Caco-2 (cell line): ENCODE measurements at regions of chr5 and their contacts with region 1.

Region 1: GRCh38 chr5:122478741-122479413 is 166.8 kb downstream of the SNCAIP start:
- DNase-seq: peak; percentile 50 to 75
- H3K4me3 ChIP-seq: peak overlapping the region; percentile 32
- H3K4me3 Mint-ChIP-seq: peak overlapping the region; percentile 83
- H3K27ac Mint-ChIP-seq: peak overlapping the region; percentile 94
- H3K4me1 ChIP-seq: peaks cover 30% of the 10 kb centered on the region
- H3K4me1 Mint-ChIP-seq: peaks cover 33% of the 10 kb centered on the region
- H3K27me3 ChIP-seq: no peaks in the 10 kb centered on the region
- H3K27me3 Mint-ChIP-seq: no peaks in the 10 kb centered on the region
- CTCF ChIP-seq: no peak

Region 2: DNA sequence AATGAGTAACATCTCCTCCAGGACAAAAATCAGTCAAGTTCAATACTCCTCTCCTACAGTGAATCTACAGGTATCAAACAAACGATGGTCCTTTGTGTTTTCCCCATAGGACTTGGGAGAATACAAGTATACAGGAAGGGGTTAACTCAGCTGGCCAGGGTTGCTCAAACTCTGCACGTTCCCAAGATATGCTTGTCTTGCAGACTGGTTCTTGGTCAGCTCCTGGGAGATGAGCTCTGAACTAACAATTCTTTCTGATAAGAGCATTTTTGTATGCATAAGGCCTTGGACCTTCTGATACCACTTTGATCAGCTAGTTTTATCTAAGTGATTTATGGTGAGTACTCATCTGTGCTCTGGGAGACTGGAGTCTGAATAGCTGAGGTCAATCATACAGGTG is 443.0 kb before region 1 on chr5:
- CTCF ChIA-PET with region 1: no interaction called
- POLR2A ChIA-PET with region 1: no interaction called
- intact Hi-C with region 1: loop called (anchors 2 kb)
- DNase-seq: peak; percentile 82 to 92
- H3K4me3 ChIP-seq: no peak overlapping the region
- H3K4me3 Mint-ChIP-seq: peak overlapping the region; percentile 50
- H3K27ac Mint-ChIP-seq: peak overlapping the region; percentile 31
- H3K4me1 ChIP-seq: peaks cover 63% of the 10 kb centered on the region
- H3K4me1 Mint-ChIP-seq: peaks cover 76% of the 10 kb centered on the region
- H3K27me3 ChIP-seq: no peaks in the 10 kb centered on the region
- H3K27me3 Mint-ChIP-seq: no peaks in the 10 kb centered on the region
- CTCF ChIP-seq: no peak

Region 3: DNA sequence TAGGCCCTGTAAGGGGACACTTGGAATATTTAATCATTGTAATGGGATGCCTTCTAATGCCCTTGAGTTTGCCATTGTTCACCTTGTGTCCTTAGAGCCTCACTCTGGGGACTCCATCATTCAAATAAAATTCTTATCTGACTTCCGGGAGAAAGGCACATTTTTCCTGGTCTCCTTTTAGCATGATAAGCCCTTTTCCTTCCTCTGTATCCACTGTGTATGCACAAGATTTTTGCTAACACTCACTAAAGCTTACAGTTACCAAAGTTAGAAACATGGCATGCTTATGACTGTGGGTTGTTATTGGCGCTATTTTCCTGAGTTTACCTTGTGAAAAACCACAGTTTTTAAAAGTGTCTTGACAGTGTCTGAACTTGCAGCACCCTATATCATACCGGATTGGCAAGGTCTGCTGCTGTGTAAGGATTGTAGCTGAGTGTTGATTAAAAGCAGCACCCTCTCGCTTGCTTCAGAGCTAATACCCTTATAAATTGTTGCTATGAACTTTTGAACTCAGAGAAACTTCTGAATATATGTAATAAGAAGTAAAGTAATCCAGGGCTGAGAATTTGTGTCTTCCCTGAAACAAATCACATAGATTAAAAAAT is 120.4 kb before region 1 on chr5:
- CTCF ChIA-PET with region 1: no interaction called
- POLR2A ChIA-PET with region 1: no interaction called
- intact Hi-C with region 1: no loop called
- DNase-seq: no peak
- H3K4me3 ChIP-seq: no peak overlapping the region
- H3K4me3 Mint-ChIP-seq: no peak overlapping the region
- H3K27ac Mint-ChIP-seq: no peak overlapping the region
- H3K4me1 ChIP-seq: peaks cover 29% of the 10 kb centered on the region
- H3K4me1 Mint-ChIP-seq: peaks cover 16% of the 10 kb centered on the region
- H3K27me3 ChIP-seq: no peaks in the 10 kb centered on the region
- H3K27me3 Mint-ChIP-seq: no peaks in the 10 kb centered on the region
- CTCF ChIP-seq: no peak

Region 4: GRCh38 chr5:122458278-122458872 is 20.5 kb before region 1 on chr5:
- CTCF ChIA-PET with region 1: no interaction called
- POLR2A ChIA-PET with region 1: no interaction called
- intact Hi-C with region 1: loop called (anchors 1 kb)
- DNase-seq: peak in 1 of 2 experiments; percentile 37
- H3K4me3 ChIP-seq: no peak overlapping the region
- H3K4me3 Mint-ChIP-seq: no peak overlapping the region
- H3K27ac Mint-ChIP-seq: no peak overlapping the region
- H3K4me1 ChIP-seq: no peaks in the 10 kb centered on the region
- H3K4me1 Mint-ChIP-seq: no peaks in the 10 kb centered on the region
- H3K27me3 ChIP-seq: no peaks in the 10 kb centered on the region
- H3K27me3 Mint-ChIP-seq: no peaks in the 10 kb centered on the region
- CTCF ChIP-seq: peak; percentile 59 to 78